Adrenal gland (tissue), 19 donors: ENCODE measurements at regions of chr2 and their contacts with region 1.

Region 1: DNA sequence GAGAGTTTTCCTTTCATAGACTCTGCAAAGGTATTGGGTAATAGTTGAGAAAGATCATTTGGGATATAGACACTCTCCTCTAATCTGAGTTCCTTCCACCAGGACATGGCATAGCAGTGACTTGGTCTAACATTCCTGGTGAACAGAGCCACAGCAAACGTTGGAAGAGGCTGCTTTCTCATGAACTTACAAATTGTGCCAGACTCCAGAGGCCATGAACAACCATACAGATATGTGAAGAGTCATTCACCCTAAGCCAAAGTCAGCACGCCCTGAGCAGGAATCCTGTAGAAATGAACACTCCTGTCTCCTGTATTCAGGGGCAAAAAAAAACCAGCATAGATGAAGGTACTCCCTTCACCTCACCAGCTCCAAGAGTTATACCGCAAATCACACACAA is 152.8 kb downstream of the TMEM18 start:
- DNase-seq: no peak
- H3K4me3 ChIP-seq: no peak overlapping the region
- H3K27ac ChIP-seq: no peak overlapping the region
- H3K4me1 ChIP-seq: no peaks in the 10 kb centered on the region
- H3K27me3 ChIP-seq: no peaks in the 10 kb centered on the region
- CTCF ChIP-seq: no peak
- POLR2A ChIP-seq: no peak

Region 2: DNA sequence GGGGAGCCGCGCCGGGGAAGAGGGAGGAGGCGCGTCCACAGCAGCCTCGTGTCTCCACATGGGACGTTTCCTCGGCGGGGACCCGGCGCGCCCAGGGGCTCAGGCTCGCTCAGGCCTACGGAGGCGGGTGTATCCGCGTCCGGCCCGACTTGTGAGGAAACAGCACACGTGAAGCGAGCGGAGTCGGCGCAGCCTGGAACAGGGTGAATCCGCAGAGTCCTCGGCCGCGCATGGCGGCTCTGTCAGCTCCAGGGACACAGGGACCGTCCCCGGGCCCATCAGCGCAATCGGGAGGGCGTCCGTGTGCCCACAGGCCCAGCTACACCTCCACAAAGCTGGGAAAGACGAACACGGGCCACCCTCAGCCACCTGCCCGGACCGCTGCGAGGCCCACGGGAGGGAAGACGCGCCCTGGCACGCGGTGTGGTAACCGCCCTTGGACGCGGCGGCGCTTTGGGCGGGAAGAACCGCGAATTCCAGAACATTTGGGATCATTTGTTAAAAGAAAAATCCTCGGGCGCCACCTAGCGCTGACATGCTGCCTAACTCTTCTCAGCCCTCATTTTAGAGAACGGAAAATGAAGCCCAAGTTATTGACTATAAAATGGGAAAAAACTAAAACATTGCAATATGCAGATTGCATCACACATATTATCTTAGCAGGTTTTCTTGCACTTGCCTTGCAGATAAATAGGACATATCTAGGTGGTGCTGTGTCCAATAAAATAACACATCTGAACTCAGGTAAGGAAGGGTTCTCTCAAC is 112.4 kb after region 1 on chr2:
- intact Hi-C with region 1: loop called (anchors 2 to 5 kb)
- DNase-seq: peak; percentile 71 to 93 (median 85)
- H3K4me3 ChIP-seq: peak overlapping the region in 1 of 4 donors; percentile 38
- H3K27ac ChIP-seq: peak overlapping the region in 1 of 5 donors; percentile 30
- H3K4me1 ChIP-seq: peaks cover 0 to 13% of the 10 kb centered on the region in 2 donors
- H3K27me3 ChIP-seq: no peaks in the 10 kb centered on the region
- CTCF ChIP-seq: peak; percentile 79 to 87 (median 80)
- POLR2A ChIP-seq: no peak

Region 3: DNA sequence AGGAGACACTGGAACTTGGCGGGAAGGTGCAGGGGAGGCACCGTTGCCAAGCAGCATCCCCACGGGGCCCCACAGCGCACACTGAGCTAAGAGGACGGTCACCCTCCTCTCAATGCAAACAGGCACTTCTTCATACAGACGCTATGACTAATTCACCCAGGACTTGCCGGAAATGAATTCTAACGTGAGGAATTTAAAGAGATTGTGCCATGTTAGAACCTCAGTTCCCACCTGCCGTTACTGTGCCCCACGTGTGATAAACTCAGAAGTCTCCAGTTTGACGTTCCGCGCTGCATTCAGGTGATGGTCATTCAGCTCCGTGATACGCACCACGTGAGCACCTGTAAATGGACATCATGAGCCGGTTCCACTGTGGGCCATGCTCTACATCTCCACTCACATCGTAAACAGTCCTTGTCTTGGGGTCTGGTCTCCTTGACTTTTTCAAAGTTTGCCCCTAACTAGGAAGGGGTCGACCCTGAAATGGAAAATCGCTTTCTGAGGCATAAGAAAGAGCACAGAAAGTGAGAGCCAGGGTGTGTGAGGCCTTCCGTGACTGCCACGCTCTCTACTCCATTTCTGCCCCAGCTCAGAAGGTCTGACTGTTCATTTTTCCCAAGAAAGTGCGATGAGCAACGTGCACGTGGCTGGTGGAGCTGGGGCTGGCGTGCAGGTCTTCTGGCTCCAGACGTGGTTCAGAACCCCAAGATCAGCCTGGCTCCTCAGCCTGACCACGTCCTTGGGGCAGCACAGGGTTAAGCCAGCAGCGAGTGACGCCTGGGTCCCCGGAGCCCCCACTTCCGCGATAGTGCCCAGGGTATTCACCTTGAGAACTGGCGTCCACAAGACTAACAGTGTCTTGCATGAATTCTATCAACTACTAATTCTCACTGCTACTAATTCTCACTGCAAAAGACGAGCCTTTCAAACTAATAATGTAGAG is 117.7 kb after region 1 on chr2:
- intact Hi-C with region 1: loop called (anchors 2 to 5 kb)
- DNase-seq: peak in 1 of 7 donors; percentile 42
- H3K4me3 ChIP-seq: no peak overlapping the region
- H3K27ac ChIP-seq: no peak overlapping the region
- H3K4me1 ChIP-seq: no peaks in the 10 kb centered on the region
- H3K27me3 ChIP-seq: no peaks in the 10 kb centered on the region
- CTCF ChIP-seq: no peak
- POLR2A ChIP-seq: no peak